ENCODE measurements at regions of chr12 and their contacts with region 1.

Region 1: DNA sequence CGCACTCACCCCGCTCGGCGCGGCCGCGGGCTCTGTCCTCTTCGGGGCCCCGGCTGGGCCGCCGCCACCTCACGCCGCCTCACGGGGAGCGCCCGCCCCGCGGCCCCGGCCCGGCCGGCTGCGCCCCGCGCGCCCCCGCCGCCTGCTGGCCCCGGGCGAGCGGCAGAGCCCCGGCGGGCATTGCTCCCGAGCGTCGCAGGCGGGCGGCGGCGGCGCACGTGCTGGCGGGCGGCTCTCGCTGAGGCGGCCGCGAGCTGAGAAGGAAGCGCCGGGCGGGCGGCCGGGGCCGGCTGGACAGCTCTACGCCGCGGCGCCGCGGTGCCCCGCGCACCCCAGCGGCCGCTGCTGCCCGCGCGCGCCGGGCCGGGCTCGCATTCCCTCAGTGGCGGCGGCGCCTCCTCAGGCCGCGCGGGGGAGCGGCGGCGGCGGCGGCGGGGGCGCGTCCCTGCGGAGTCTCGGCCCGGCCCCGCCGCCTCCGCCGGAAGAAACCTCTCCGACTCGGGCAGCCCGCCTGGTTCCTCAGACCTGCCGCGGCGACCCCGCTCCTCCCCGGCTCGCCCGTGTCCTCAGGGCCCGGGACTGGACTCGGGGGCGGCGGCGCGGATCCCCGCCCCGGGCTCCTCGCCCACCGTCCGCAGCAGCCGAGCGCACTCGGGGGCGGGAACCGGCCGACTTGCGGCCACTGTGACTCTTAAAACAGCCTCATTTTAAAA is at the start of gene PITPNM2:
- DNase-seq: peak; percentile 69
- ATAC-seq: peak; percentile 84
- H3K4me3 ChIP-seq: peak within 1 kb of the TSS; percentile 80
- H3K27ac ChIP-seq: no peak within 1 kb of the TSS
- H3K4me1 ChIP-seq: peaks cover 17% of the 10 kb centered on the region
- H3K27me3 ChIP-seq: no peaks in the 10 kb centered on the region
- CTCF ChIP-seq: no peak
- total RNA-seq, gene PITPNM2: 5.6 and 8.1 TPM in 2 replicates

Region 2: GRCh38 chr12:122974274-122974891 is 176.5 kb before region 1 on chr12:
- CTCF ChIA-PET with region 1: no interaction called
- POLR2A ChIA-PET with region 1: no interaction called
- intact Hi-C with region 1: no loop called
- DNase-seq: peak; percentile 98
- ATAC-seq: peak; percentile 79
- H3K4me3 ChIP-seq: peak overlapping the region; percentile 96
- H3K27ac ChIP-seq: peak overlapping the region; percentile 83
- H3K4me1 ChIP-seq: peaks cover 13% of the 10 kb centered on the region
- H3K27me3 ChIP-seq: no peaks in the 10 kb centered on the region
- CTCF ChIP-seq: no peak

Region 3: DNA sequence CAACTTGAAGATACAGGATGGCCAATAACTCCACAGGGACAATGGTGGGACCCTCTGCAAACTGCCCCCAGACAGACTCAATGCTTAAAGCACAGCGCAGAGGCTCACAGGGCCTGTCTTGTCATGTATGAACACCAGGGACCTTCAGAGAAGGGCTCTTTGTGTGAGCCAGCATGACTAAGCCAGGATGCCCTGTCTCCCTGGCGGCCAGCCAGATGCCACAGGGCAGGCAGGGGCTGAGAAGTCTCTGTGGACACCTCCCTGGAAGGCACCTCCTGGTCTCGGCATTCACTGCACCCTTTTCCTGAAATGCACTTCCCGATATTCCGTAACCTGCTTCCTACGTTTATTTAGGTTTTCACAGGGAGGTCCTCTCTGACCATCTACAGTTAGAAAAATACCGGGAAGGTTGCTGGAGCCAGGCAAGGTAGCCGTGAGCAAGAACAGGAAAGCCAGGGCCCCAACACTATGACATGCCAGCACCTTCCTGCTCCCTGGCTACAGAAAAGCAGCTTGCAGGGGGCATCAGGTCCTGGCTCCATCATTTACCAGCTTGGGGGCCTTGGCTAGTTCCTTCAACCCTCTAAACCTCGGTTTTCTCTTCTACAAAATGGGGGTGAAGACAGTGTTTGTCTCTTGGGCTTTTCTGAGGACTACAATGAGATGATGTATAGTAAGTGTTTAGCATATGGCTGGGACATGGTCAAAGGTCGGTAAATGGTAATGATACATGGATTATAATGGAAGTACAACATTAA is 65.0 kb before region 1 on chr12:
- CTCF ChIA-PET with region 1: no interaction called
- POLR2A ChIA-PET with region 1: no interaction called
- intact Hi-C with region 1: loop called (anchors 5 kb)
- DNase-seq: peak; percentile 96
- ATAC-seq: peak; percentile 77
- H3K4me3 ChIP-seq: no peak overlapping the region
- H3K27ac ChIP-seq: peak overlapping the region; percentile 64
- H3K4me1 ChIP-seq: peaks cover 40% of the 10 kb centered on the region
- H3K27me3 ChIP-seq: no peaks in the 10 kb centered on the region
- CTCF ChIP-seq: no peak

Region 4: GRCh38 chr12:123115409-123116121 is 35.3 kb before region 1 on chr12:
- CTCF ChIA-PET with region 1: interaction called, 5 read pairs
- POLR2A ChIA-PET with region 1: interaction called, 14 read pairs
- intact Hi-C with region 1: no loop called
- DNase-seq: peak; percentile 51
- ATAC-seq: peak; percentile 89
- H3K4me3 ChIP-seq: no peak overlapping the region
- H3K27ac ChIP-seq: peak overlapping the region; percentile 31
- H3K4me1 ChIP-seq: peaks cover 20% of the 10 kb centered on the region
- H3K27me3 ChIP-seq: no peaks in the 10 kb centered on the region
- CTCF ChIP-seq: no peak